Gastrocnemius medialis (tissue), 4 donors: ENCODE measurements at regions of chr2 and their contacts with region 1.

Region 1: DNA sequence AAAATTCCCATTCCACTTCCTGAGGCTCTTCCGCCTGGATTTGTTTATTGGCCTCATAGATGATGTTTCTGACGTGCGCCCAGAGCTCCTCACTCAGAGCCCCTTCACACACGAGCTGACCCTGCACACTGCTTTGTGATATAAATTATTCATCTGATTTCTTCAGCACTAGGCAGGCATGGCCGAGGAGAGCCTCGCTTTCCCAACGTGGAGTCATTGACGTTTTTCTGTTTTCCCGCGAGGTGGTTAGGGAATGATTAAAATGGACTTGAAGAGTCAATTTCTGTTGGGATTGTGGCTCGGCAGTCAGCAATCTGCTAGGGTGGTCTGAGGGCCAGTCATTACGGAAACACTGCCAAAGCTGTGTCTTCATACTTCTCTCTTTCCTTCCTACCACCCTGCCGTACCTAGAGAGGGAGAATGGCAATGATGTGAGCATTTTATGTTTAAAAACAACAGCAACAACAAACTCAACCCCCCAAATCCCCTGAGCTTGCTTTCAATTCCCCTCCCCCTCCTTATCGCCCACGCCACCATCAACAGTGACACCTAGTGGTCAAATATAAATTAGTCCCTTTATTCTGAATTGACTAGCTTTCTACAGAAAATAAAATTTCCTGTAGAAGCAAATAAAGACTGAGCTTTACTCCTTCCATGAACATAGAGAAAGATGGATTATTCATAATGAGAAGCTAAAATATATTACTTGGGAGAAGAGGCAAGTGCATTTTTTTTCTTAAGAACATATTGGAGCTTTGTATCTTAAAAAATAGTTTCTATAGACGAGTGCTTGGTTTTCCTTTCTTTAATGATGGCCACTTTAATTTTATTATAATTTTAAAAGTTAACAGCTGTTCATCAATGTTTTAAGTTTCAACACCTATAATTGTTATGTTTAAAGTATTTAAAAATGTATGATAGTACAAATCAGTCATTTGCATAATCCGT is 285.1 kb downstream of the MTX2 start:
- DNase-seq: no peak
- ATAC-seq: peak; percentile 64 to 76
- H3K4me3 ChIP-seq: peak overlapping the region; percentile 57 to 65 (median 62)
- H3K27ac ChIP-seq: peak overlapping the region; percentile 55 to 69 (median 61)
- H3K4me1 ChIP-seq: peaks cover 6 to 11% of the 10 kb centered on the region in 2 donors
- H3K27me3 ChIP-seq: no peaks in the 10 kb centered on the region
- CTCF ChIP-seq: peak; percentile 61 to 84 (median 70)
- POLR2A ChIP-seq: no peak

Region 2: DNA sequence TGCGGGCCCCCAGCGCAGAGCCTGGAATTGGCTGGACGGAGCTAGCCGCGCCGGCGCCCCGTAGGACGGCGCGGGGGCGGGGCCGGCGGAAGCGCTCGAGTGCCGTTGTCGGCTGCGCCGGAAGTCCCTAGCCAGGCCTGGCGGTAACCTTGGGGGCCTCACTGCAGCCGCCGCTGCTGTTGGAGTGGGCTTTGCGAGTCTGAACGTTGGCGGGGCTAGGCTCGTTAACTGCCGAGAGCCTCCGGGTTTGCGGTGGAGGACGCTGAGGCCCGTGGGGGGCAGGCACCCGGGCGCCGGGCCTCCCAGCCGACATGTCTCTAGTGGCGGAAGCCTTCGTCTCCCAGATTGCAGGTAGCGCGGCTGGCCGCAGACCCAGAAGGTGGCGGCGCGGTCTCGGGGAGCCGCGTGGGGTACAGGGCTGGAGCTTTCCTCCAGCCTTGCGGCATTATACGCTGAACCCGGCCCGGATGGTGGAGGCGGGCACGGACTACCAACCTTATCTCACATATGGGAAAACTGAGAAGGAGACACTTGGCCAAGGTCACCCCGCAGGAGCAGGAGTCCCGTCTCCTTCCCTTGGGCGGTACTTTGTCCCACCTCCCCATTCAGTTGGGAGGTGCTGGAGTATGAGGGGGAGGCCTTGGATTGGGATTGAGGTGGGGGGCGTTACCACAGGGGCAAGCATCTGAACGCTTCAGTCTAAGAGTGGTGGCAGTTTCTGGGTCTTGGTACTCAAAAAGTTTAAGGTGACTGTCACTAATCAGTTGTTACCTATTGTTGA is 284.9 kb before region 1 on chr2 and contains the start of gene MTX2:
- in situ Hi-C with region 1: no loop called
- intact Hi-C with region 1: loop called (anchors 10 kb)
- DNase-seq: peak; percentile 48 to 61
- ATAC-seq: peak; percentile 93 to 95
- H3K4me3 ChIP-seq: peak within 1 kb of the TSS; percentile 84 to 94 (median 89)
- H3K27ac ChIP-seq: peak within 1 kb of the TSS; percentile 85 to 92 (median 89)
- H3K4me1 ChIP-seq: peaks cover 13 to 29% of the 10 kb centered on the region in 2 donors
- H3K27me3 ChIP-seq: no peaks in the 10 kb centered on the region
- CTCF ChIP-seq: peak in 3 of 5 experiments; percentile 19 to 46 (median 29)
- POLR2A ChIP-seq: peak; percentile 59 to 61
- total RNA-seq, gene MTX2: 35.8 to 43.3 (median 39.1) TPM

Region 3: GRCh38 chr2:176454893-176455811 is 99.2 kb before region 1 on chr2:
- in situ Hi-C with region 1: loop called in 1 of 4 experiments (anchors 10 kb)
- intact Hi-C with region 1: loop called (anchors 2 kb)
- DNase-seq: peak; percentile 42 to 59
- ATAC-seq: peak; percentile 10 to 72
- H3K4me3 ChIP-seq: no peak overlapping the region
- H3K27ac ChIP-seq: peak overlapping the region; percentile 24 to 59 (median 45)
- H3K4me1 ChIP-seq: peaks cover 0 to 5% of the 10 kb centered on the region in 2 donors
- H3K27me3 ChIP-seq: no peaks in the 10 kb centered on the region
- CTCF ChIP-seq: peak; percentile 66 to 95 (median 82)
- POLR2A ChIP-seq: no peak

Region 4: DNA sequence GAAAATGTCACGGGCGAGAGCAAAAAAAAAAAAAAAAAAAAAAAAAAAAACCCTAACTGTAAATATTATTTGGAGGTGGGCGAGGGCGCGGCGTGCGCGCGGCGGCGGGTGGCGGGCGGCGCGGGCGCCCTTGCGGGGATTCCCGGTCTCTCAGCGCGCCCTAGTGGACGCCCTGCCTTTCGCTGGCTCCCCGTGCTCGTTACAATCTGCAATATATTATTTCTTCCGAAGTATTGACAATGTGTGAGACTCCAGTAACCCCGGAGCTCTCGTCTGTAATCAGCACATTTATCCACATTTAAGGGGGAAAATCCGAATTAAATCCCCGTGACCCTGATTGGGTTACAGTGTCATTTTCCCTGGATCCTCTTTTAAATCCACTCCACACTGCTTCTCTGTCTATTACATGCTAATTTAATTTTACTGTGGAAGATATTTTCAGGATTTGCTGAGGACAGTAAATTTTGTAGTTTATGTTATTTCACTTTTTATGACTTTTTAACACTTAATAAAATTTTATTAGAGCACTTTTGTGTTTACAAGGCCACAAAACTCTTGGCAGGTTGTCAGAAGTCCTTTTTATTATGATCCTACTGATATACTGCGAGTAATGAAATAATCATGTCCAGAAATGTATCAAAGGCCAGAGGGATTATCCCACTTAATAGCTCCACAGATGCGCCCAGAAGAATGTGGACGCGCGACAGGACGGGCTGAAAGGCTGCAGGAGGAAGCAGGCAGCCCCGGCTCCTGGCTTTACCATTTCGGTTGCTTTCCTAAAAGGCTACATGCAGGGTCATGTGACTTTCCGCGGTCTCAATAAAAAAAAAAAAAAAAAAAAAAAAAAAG is 84.0 kb after region 1 on chr2:
- in situ Hi-C with region 1: no loop called
- intact Hi-C with region 1: loop called (anchors 5 kb)
- DNase-seq: peak; percentile 26 to 37
- ATAC-seq: peak; percentile 81 to 88
- H3K4me3 ChIP-seq: peak overlapping the region; percentile 63 to 84 (median 68)
- H3K27ac ChIP-seq: peak overlapping the region in 3 of 4 donors; percentile 50 to 70 (median 56)
- H3K4me1 ChIP-seq: peaks cover 0 to 5% of the 10 kb centered on the region in 2 donors
- H3K27me3 ChIP-seq: peaks cover 9 to 31% (median 23%) of the 10 kb centered on the region in 3 donors
- CTCF ChIP-seq: peak; percentile 59 to 81 (median 74)
- POLR2A ChIP-seq: no peak

Region 5: GRCh38 chr2:176653479-176654443 is 99.4 kb after region 1 on chr2:
- in situ Hi-C with region 1: no loop called
- intact Hi-C with region 1: no loop called
- DNase-seq: peak; percentile 20 to 45
- ATAC-seq: peak; percentile 54 to 81
- H3K4me3 ChIP-seq: no peak overlapping the region
- H3K27ac ChIP-seq: no peak overlapping the region
- H3K4me1 ChIP-seq: no peaks in the 10 kb centered on the region
- H3K27me3 ChIP-seq: peaks cover 0 to 3% (median 0%) of the 10 kb centered on the region in 3 donors
- CTCF ChIP-seq: peak in 4 of 5 experiments; percentile 32 to 71 (median 57)
- POLR2A ChIP-seq: no peak

Region 6: DNA sequence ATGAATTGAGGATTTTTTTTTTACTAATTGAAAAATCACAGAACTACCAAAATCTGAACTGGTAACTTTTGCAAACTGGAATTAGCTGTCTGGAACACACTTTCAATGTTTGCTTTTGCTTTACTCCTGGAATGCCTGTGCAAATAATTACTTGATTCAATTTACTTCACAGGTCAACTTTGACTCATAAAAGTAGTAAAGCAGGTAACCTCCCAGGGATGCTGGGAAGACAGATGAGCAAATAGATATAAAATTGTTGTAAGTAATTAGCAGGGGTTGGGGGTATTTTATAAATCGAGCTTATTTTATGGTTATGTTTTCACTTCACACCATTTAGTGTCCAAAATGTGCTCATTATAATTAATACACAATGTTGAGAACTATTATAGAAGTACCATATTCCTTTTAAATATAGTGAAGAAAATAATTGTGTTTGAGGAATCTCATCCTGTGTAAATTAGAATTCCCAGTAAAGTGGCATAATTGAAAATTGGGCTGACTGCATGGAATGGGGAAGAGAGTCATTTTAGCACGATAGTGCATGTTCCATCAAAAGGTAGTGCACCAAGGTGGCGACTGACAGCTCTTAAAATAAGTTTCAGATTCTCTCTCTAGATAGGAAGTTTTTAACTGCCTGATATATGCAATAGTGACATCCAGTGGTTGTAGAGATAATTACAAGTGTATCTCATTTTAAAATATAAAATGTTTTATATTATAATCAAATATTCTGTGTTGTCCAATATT is 260.1 kb after region 1 on chr2:
- in situ Hi-C with region 1: no loop called
- intact Hi-C with region 1: loop called (anchors 10 kb)
- DNase-seq: no peak
- ATAC-seq: no peak
- H3K4me3 ChIP-seq: no peak overlapping the region
- H3K27ac ChIP-seq: no peak overlapping the region
- H3K4me1 ChIP-seq: peaks cover 0 to 3% of the 10 kb centered on the region in 2 donors
- H3K27me3 ChIP-seq: no peaks in the 10 kb centered on the region
- CTCF ChIP-seq: peak in 3 of 5 experiments; percentile 32 to 73 (median 60)
- POLR2A ChIP-seq: no peak